CD8-positive, alpha-beta T cell (primary cell): ENCODE measurements at regions of chr7 and their contacts with region 1.

Region 1: GRCh38 chr7:103573479-103574058 is 127.6 kb upstream of the SLC26A5 start:
- DNase-seq: peak in 2 of 9 experiments; percentile 33 to 47
- ATAC-seq: no peak
- H3K4me3 ChIP-seq: no peak overlapping the region
- H3K4me3 Mint-ChIP-seq: no peak overlapping the region
- H3K27ac ChIP-seq: no peak overlapping the region
- H3K27ac Mint-ChIP-seq: no peak overlapping the region
- H3K4me1 ChIP-seq: no peaks in the 10 kb centered on the region
- H3K4me1 Mint-ChIP-seq: no peaks in the 10 kb centered on the region
- H3K27me3 ChIP-seq: no peaks in the 10 kb centered on the region
- H3K27me3 Mint-ChIP-seq: peaks cover 8% of the 10 kb centered on the region
- CTCF ChIP-seq: peak; percentile 78

Region 2: GRCh38 chr7:104156842-104157277 is 583.3 kb after region 1 on chr7:
- CTCF ChIA-PET with region 1: no interaction called
- POLR2A ChIA-PET with region 1: no interaction called
- intact Hi-C with region 1: loop called (anchors 2 kb)
- DNase-seq: peak in 2 of 9 experiments; percentile 8 to 13
- ATAC-seq: no peak
- H3K4me3 ChIP-seq: no peak overlapping the region
- H3K4me3 Mint-ChIP-seq: no peak overlapping the region
- H3K27ac ChIP-seq: no peak overlapping the region
- H3K27ac Mint-ChIP-seq: no peak overlapping the region
- H3K4me1 ChIP-seq: no peaks in the 10 kb centered on the region
- H3K4me1 Mint-ChIP-seq: peaks cover 2% of the 10 kb centered on the region
- H3K27me3 ChIP-seq: no peaks in the 10 kb centered on the region
- H3K27me3 Mint-ChIP-seq: no peaks in the 10 kb centered on the region
- CTCF ChIP-seq: no peak

Region 3: DNA sequence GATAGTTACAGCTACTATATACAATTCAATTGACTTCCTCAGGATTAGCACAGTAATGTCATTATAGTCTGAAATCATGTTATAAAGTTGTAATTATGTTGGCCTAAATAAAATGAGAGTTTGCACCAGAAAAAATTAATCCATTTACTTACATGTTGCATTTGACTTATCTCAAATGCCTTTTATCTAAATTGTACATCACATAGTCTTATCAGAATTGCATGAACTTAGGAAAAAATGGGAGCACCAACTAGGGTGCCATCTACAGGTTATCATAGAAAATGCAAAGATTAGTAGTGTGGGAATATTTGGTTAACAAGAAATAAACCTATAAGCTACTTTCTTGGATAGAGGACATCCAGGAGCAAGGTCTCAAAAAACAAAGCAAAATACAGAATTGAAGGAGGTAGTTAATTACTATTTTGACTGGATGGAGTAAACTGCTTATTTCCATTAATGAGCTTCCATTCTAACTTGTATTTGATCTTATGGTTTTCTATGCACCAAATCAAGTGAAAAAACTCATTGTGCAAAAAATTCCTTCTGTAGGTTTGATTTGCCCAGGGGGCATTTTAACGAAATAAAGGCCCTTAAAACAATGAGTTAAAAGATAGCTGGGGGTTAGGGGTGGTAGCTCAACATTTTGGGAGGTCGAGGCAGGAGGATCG is 694.3 kb after region 1 on chr7:
- CTCF ChIA-PET with region 1: interaction called, 4 read pairs
- POLR2A ChIA-PET with region 1: no interaction called
- intact Hi-C with region 1: loop called in 1 of 2 experiments (anchors 5 kb)
- DNase-seq: peak in 1 of 9 experiments; percentile 3
- ATAC-seq: no peak
- H3K4me3 ChIP-seq: no peak overlapping the region
- H3K4me3 Mint-ChIP-seq: no peak overlapping the region
- H3K27ac ChIP-seq: no peak overlapping the region
- H3K27ac Mint-ChIP-seq: no peak overlapping the region
- H3K4me1 ChIP-seq: no peaks in the 10 kb centered on the region
- H3K4me1 Mint-ChIP-seq: no peaks in the 10 kb centered on the region
- H3K27me3 ChIP-seq: peaks cover 0 to 6% of the 10 kb centered on the region in 2 experiments
- H3K27me3 Mint-ChIP-seq: peaks cover 21% of the 10 kb centered on the region
- CTCF ChIP-seq: no peak

Region 4: GRCh38 chr7:104848138-104848990 is 1274.8 kb after region 1 on chr7:
- CTCF ChIA-PET with region 1: interaction called, 3 read pairs
- POLR2A ChIA-PET with region 1: no interaction called
- intact Hi-C with region 1: loop called (anchors 1 to 2 kb)
- DNase-seq: peak; percentile 9 to 63 (median 54)
- ATAC-seq: peak; percentile 31
- H3K4me3 ChIP-seq: no peak overlapping the region
- H3K4me3 Mint-ChIP-seq: no peak overlapping the region
- H3K27ac ChIP-seq: no peak overlapping the region
- H3K27ac Mint-ChIP-seq: no peak overlapping the region
- H3K4me1 ChIP-seq: no peaks in the 10 kb centered on the region
- H3K4me1 Mint-ChIP-seq: no peaks in the 10 kb centered on the region
- H3K27me3 ChIP-seq: no peaks in the 10 kb centered on the region
- H3K27me3 Mint-ChIP-seq: peaks cover 29% of the 10 kb centered on the region
- CTCF ChIP-seq: peak; percentile 79